ENCODE measurements at regions of chr12 and their contacts with region 1.

Region 1: GRCh38 chr12:130031571-130032189 is 127.9 kb upstream of the TMEM132D start:
- DNase-seq: peak; percentile 60
- ATAC-seq: peak; percentile 97
- H3K4me3 ChIP-seq: no peak overlapping the region
- H3K27ac ChIP-seq: no peak overlapping the region
- H3K4me1 ChIP-seq: no peaks in the 10 kb centered on the region
- H3K27me3 ChIP-seq: peaks cover 1 to 25% of the 10 kb centered on the region in 2 experiments; a peak in 2 of 5 replicates
- CTCF ChIP-seq: peak; percentile 81
- EP300 ChIP-seq: no peak
- POLR2A ChIP-seq: no peak
- RAD21 ChIP-seq: no peak

Region 2: GRCh38 chr12:130104571-130105106 is 73.0 kb after region 1 on chr12:
- CTCF ChIA-PET with region 1: no interaction called
- POLR2A ChIA-PET with region 1: no interaction called
- in situ Hi-C with region 1: no loop called
- intact Hi-C with region 1: no loop called
- DNase-seq: no peak
- ATAC-seq: no peak
- H3K4me3 ChIP-seq: no peak overlapping the region
- H3K27ac ChIP-seq: no peak overlapping the region
- H3K4me1 ChIP-seq: no peaks in the 10 kb centered on the region
- H3K27me3 ChIP-seq: peaks cover 4 to 39% of the 10 kb centered on the region in 2 experiments; a peak in 4 of 5 replicates
- CTCF ChIP-seq: no peak
- EP300 ChIP-seq: no peak
- POLR2A ChIP-seq: no peak
- RAD21 ChIP-seq: no peak

Region 3: DNA sequence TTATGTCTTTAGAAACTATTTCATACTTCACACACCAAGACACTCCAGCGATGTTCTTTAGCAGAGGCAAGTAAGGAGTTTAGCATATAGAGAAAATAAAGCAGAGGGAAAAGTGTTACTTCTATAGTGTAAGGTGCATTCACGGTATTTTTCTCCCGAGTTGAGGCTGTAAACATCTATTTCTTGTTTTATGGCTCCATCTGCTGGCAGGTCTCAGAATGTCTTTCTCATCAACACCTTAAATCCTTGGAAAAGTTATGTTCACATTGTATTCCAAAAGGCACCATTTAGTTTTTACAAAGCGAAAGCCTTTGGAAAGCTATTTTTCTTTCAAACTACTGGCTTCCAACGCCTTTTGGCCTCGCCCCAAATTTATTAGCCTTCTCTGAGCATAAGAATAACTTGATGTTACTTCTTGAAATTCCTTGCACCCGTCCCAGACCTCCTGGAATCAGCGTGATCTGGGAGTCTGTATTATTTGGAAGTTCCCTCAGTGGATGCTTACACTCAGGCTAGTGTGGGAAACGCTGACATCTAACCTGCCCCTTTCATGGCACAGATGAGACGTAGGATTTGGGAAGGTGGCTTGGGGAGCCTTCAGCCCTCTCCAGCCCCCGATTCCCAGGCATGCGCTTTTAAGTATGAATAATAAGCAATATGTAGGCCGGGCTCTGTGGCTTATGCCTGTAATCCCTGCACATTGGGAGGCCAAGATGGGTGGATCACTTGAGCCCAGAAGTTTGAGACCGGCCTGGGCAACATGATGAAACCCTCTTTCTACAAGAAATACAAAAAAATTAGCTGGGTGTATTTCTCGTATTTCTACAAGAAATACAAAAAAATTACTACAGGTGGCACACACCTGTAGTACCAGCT is 304.1 kb after region 1 on chr12:
- CTCF ChIA-PET with region 1: interaction called, 6 read pairs
- POLR2A ChIA-PET with region 1: no interaction called
- in situ Hi-C with region 1: no loop called
- intact Hi-C with region 1: loop called (anchors 1 kb)
- DNase-seq: peak; percentile 52
- ATAC-seq: peak; percentile 67
- H3K4me3 ChIP-seq: no peak overlapping the region
- H3K27ac ChIP-seq: no peak overlapping the region
- H3K4me1 ChIP-seq: no peaks in the 10 kb centered on the region
- H3K27me3 ChIP-seq: peaks cover 2 to 23% of the 10 kb centered on the region in 2 experiments
- CTCF ChIP-seq: peak; percentile 73
- EP300 ChIP-seq: no peak
- POLR2A ChIP-seq: no peak
- RAD21 ChIP-seq: peak; percentile 39; the same call in 1 of the 2 replicates

Measured in HepG2 (cell line).